Endothelial cell of umbilical vein (primary cell): ENCODE measurements at regions of chr19 and their contacts with region 1.

Region 1: DNA sequence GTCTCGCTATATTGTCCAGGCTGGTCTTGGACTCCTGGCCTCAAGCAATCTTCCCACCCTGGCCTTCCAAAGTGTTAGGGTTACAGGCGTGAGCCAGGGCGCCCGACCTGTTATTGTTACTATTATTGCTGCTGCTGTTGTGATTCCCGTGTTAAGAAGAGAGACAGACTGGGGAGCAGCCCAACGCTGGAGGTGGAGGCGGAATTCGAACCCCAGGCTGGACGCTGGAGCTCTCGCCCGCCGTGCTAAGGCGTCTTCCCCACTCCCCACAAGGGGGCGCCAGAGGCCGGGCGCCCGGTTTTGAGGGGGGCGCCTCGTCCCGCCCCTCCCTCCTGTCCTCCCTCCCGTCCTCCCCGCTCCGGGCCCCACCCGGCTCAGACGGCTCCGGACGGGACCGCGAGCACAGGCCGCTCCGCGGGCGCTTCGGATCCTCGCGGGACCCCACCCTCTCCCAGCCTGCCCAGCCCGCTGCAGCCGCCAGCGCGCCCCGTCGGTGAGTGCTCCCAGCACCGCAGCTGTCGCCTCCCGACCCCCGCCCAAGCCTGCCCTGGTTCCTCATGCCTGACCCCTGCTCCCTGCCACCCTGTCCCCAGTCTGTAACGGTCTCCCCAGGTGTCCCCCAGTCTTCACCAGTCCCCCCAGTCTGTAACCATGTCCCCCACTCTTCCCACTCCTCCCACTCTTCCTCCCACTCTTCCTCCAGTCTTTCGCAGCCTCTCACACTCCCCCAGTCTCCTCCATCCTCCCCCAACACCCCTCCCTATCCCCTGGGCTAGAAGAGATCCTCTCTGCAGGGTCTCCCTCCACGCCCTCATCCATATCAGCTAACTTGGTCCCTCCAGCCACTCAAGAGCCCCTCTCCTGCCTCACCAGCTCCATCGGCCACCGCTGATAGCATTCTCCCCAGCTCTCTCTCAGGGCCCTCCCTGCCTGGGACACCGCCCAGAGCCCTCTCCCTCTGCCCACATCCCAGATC is at the start of gene EHD2:
- DNase-seq: peak; percentile 61
- H3K4me3 ChIP-seq: peak within 1 kb of the TSS; percentile 55 to 92 (median 70)
- H3K27ac ChIP-seq: no peak within 1 kb of the TSS
- H3K4me1 ChIP-seq: peaks cover 8% of the 10 kb centered on the region
- H3K27me3 ChIP-seq: no peaks in the 10 kb centered on the region
- CTCF ChIP-seq: peak; percentile 83 to 98
- POLR2A ChIP-seq: peak; percentile 93
- total RNA-seq, gene EHD2: 220 TPM in 2 replicates

Region 2: DNA sequence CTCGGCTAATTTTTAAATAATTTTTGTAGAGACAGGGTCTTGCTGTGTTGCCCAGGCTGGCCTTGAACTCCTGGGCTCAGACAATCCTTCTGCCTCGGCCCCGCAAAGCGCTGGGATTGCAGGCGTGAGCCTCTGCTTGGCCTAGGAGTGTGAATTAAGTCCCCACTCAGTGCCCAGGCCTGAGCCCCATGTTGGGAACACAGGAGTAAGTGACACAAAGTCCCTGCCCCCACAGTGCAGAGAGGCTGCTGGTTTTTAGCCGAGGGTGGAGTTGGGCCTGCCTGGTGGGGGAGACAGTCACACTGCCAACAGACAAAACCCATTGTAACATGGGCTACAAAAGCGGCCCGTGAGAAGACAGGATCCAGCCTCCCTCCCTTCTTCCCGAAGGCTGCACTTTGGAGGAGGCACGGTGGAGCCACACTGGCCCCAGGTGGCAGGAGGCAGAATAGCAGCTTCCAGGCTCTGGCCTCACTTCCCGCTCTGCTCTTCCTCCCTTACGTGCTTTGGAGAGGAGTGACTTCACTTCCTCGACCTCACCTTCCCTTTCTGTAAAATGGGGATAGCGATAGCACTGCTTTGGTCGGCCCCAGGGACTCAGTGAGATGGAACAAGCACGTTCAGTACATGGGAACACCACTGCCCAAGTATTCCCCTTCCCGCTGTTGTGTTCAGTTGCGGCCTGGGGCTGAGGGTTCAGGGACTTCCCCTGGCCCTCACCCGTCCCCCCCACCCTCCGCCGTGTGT is 15.3 kb before region 1 on chr19:
- CTCF ChIA-PET with region 1: interaction called, 26 read pairs
- POLR2A ChIA-PET with region 1: no interaction called
- dilution Hi-C with region 1: no loop called
- intact Hi-C with region 1: no loop called
- DNase-seq: peak; percentile 79
- H3K4me3 ChIP-seq: no peak overlapping the region
- H3K27ac ChIP-seq: no peak overlapping the region
- H3K4me1 ChIP-seq: no peaks in the 10 kb centered on the region
- H3K27me3 ChIP-seq: no peaks in the 10 kb centered on the region
- CTCF ChIP-seq: peak; percentile 97 to 99
- POLR2A ChIP-seq: no peak

Region 3: DNA sequence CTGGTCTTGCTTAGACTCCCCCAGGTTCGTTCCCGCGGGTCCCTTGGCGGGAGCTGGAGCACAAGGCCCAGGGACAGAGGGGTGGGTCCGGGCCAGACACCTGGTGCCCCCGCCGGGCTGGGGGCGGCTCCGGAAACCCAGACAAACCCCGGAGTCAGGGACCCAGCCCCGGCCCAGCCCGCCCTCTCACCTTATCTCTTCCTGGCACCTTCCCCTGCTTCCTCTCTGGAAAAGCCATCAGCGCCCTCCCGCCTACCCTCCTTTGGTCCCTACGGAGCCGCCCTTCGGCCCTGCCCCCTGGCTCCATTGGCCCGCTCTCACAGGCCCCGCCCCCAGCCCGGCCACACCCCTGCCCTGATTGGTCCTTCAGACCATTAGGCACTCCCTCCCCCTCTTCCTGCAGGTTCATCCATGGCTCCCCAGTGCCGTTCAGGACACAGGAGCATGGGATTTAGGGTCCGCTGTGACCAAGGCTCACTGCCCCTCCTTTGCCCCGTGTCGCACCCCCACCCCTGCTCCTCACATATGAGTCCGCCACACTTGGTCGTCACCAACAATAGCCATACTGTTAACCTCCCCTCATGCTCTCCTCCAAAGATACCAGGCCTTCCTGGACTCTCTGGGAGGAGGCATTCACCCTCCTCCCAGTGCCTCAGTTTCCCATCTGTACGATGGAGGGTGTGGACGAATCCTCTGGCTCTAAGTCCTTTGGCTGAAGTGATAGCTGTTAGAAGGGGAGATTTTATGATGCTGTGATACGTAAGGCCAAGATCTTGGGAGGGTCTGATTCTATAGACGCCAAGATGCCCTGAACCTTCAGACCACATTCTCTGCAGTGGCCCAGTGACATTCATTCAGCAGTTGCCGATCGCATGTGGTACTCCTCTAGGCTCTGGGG is 16.9 kb after region 1 on chr19:
- CTCF ChIA-PET with region 1: interaction called, 47 read pairs
- POLR2A ChIA-PET with region 1: interaction called, 4 read pairs
- dilution Hi-C with region 1: no loop called
- intact Hi-C with region 1: loop called (anchors 1 kb)
- DNase-seq: peak; percentile 93
- H3K4me3 ChIP-seq: peak overlapping the region in 1 of 3 experiments; percentile 18
- H3K27ac ChIP-seq: peak overlapping the region; percentile 97
- H3K4me1 ChIP-seq: peaks cover 23% of the 10 kb centered on the region
- H3K27me3 ChIP-seq: no peaks in the 10 kb centered on the region
- CTCF ChIP-seq: no peak
- POLR2A ChIP-seq: peak; percentile 21

Region 4: DNA sequence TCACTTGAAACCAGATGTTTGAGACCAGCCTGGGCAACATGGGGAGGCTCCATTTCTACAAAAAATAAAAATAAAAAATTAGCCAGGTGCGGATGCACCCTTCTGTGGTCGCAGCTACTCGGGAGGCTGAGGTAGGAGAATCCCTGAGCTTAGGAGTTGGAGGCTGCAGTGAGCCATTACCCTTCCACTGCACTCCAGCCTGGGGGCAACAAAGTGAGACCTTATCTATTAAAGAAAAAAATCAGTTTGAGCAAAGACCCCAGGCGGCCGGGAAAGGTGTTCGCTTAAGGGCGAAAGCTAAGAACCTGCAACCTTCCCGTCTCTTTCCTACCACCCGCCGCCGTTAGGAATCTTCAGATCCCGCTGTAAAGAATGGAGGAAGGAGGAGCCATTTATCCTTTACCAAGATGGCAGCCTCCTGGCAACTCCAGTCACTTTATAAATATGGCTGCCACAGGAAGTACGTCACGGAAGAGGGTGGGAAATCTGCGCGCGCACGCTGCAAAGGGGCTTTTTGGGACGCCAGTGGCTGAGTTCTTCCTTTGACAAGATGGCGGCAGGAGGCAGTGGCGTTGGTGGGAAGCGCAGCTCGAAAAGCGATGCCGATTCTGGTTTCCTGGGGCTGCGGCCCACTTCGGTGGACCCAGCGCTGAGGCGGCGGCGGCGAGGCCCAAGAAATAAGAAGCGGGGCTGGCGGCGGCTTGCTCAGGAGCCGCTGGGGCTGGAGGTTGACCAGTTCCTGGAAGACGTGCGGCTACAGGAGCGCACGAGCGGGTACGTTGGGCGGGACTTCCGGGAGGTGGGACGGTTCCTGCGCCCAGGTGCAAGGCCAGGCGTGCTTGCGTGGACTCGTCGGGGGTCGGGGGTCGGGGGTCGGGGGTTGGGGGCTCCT is 31.9 kb after region 1 on chr19 and contains the start of gene NOP53:
- CTCF ChIA-PET with region 1: interaction called, 258 read pairs
- POLR2A ChIA-PET with region 1: interaction called, 8 read pairs
- dilution Hi-C with region 1: no loop called
- intact Hi-C with region 1: loop called (anchors 1 kb)
- DNase-seq: peak; percentile 98
- H3K4me3 ChIP-seq: peak within 1 kb of the TSS; percentile 66 to 87 (median 80)
- H3K27ac ChIP-seq: peak within 1 kb of the TSS; percentile 78
- H3K4me1 ChIP-seq: peaks cover 21% of the 10 kb centered on the region
- H3K27me3 ChIP-seq: no peaks in the 10 kb centered on the region
- CTCF ChIP-seq: no peak
- POLR2A ChIP-seq: peak; percentile 85
- total RNA-seq, gene NOP53: 150 and 189 TPM in 2 replicates

Region 5: GRCh38 chr19:47765523-47766358 is 52.4 kb after region 1 on chr19:
- CTCF ChIA-PET with region 1: interaction called, 33 read pairs
- POLR2A ChIA-PET with region 1: no interaction called
- dilution Hi-C with region 1: no loop called
- intact Hi-C with region 1: no loop called
- DNase-seq: peak; percentile 58
- H3K4me3 ChIP-seq: no peak overlapping the region
- H3K27ac ChIP-seq: no peak overlapping the region
- H3K4me1 ChIP-seq: peaks cover 4% of the 10 kb centered on the region
- H3K27me3 ChIP-seq: peaks cover 0 to 2% of the 10 kb centered on the region in 2 experiments
- CTCF ChIP-seq: peak; percentile 79 to 93
- POLR2A ChIP-seq: no peak

Region 6: GRCh38 chr19:47790398-47790814 is 77.1 kb after region 1 on chr19:
- CTCF ChIA-PET with region 1: interaction called, 44 read pairs
- POLR2A ChIA-PET with region 1: no interaction called
- dilution Hi-C with region 1: no loop called
- intact Hi-C with region 1: loop called (anchors 1 kb)
- DNase-seq: peak; percentile 64
- H3K4me3 ChIP-seq: no peak overlapping the region
- H3K27ac ChIP-seq: no peak overlapping the region
- H3K4me1 ChIP-seq: no peaks in the 10 kb centered on the region
- H3K27me3 ChIP-seq: no peaks in the 10 kb centered on the region
- CTCF ChIP-seq: peak; percentile 75 to 90
- POLR2A ChIP-seq: no peak